Common myeloid progenitor, CD34-positive (primary cell): ENCODE measurements at regions of chr15 and their contacts with region 1.

Region 1: GRCh38 chr15:94163999-94164807 is 67.2 kb upstream of the MCTP2 start:
- DNase-seq: peak; percentile 71 to 87 (median 79)
- H3K4me3 ChIP-seq: no peak overlapping the region
- H3K27ac ChIP-seq: no peak overlapping the region
- H3K4me1 ChIP-seq: peaks cover 0 to 8% (median 7%) of the 10 kb centered on the region in 4 experiments
- H3K27me3 ChIP-seq: no peaks in the 10 kb centered on the region

Region 2: GRCh38 chr15:94174399-94174802 is 10.2 kb after region 1 on chr15:
- CTCF ChIA-PET with region 1: interaction called, 14 read pairs
- POLR2A ChIA-PET with region 1: no interaction called
- DNase-seq: peak; percentile 91 to 98 (median 96)
- H3K4me3 ChIP-seq: peak overlapping the region in 1 of 7 experiments; percentile 20
- H3K27ac ChIP-seq: no peak overlapping the region
- H3K4me1 ChIP-seq: peaks cover 7 to 25% (median 19%) of the 10 kb centered on the region in 4 experiments
- H3K27me3 ChIP-seq: no peaks in the 10 kb centered on the region

Region 3: GRCh38 chr15:94247789-94248638 is 83.8 kb after region 1 on chr15:
- CTCF ChIA-PET with region 1: interaction called, 12 read pairs
- POLR2A ChIA-PET with region 1: interaction called, 3 read pairs
- DNase-seq: no peak
- H3K4me3 ChIP-seq: no peak overlapping the region
- H3K27ac ChIP-seq: no peak overlapping the region
- H3K4me1 ChIP-seq: peaks cover 4 to 19% (median 8%) of the 10 kb centered on the region in 4 experiments
- H3K27me3 ChIP-seq: no peaks in the 10 kb centered on the region

Region 4: DNA sequence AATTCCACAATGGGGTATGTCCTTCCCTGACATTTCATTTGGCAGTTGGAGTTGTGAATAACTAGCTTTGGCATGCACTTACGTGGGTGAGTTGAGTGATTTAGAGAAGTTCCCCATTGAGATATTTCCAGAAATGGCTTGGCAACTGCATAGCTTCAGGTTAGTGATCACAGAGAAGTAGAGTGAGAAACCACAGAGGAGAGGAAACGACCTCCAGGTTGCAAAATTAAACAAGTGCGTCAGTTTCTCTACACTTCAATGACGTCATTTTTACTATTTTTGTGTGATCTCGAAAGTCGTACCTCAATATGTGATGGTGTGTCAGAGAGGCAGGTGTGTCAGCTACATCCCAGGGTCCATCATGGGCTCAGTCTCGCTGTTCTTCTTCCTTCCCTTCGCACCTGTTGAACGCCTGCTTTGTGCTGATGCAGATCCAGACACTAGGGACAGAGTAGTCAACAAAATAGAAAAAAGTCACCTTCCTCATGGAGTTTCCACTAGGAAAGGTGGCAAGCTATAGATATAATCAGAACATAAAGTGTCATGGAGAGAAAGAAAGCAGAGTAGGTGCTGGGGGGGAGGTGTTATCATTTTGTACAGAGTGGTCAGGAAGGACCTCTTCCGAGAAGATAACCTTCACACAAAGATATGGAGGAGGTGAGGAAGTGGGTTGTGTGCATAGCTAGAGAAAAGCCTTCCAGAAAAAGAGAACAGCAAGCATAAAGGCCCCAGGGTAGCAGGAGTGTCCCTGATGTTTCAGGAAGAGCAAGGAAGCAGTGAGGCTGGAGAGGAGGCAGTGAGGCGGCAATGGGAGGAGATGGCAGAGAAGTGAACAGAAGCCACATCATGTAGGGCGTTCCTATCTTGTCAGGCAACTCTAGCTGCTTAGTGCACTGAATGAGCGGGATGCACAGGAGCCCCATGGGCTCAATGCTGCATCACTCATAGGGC is 142.8 kb after region 1 on chr15:
- CTCF ChIA-PET with region 1: interaction called, 27 read pairs
- POLR2A ChIA-PET with region 1: no interaction called
- DNase-seq: peak; percentile 71 to 93 (median 79)
- H3K4me3 ChIP-seq: peak overlapping the region in 1 of 7 experiments; percentile 21
- H3K27ac ChIP-seq: peak overlapping the region; percentile 47 to 72
- H3K4me1 ChIP-seq: peaks cover 11 to 49% (median 34%) of the 10 kb centered on the region in 4 experiments
- H3K27me3 ChIP-seq: no peaks in the 10 kb centered on the region

Region 5: DNA sequence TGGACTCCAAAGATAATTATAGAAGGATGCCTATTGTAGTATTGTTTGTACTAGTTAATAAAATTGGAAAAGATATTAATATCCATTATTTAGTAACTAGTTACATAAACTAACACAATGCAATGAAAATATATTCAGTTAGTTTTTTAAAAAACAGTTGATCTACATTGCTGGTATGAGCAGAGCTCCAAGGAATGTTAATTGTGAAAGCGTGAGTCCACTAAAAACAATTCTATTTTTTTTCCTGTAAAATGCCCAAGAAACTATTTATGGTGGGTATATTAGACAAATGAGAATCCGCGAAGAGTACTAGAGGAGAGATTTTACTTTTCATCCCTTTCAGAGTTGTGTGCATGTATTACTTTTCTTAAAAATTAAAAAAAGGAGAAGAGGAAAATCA is 171.4 kb after region 1 on chr15:
- CTCF ChIA-PET with region 1: interaction called, 53 read pairs
- POLR2A ChIA-PET with region 1: no interaction called
- DNase-seq: no peak
- H3K4me3 ChIP-seq: no peak overlapping the region
- H3K27ac ChIP-seq: no peak overlapping the region
- H3K4me1 ChIP-seq: peaks cover 0 to 8% (median 3%) of the 10 kb centered on the region in 4 experiments
- H3K27me3 ChIP-seq: no peaks in the 10 kb centered on the region